HCT116 (cell line): ENCODE measurements at regions of chr16 and their contacts with region 1.

Region 1: DNA sequence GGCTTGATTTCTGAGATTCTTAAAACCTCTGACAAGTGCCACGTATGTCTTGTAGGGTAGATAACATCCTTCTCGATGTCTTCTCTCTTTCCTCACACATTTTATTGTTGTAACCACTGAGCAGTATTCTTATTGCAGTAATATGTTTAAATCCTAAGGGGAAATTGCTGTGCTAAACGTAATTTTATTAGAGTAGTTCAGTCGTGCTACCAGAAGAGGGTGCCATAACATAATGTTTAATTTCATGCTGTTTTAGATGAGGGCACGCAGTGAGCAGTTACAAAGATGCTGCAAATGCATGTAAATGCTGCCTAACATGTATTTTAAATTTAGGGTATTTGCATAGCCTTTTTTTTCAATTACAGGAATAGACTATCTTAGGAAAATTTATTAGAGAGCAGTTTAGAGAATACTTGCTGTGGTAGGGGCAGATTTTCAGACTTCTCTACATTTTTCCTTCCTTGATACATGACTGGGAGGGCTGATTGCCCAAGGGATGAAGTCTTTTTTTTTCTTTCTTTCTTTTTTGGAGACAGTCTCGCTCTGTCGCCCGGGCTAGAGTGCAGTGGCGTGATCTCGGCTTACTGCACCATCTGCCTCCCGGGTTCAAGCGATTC is 51.7 kb downstream of the GAN start:
- DNase-seq: peak; percentile 46
- ATAC-seq: peak; percentile 89
- H3K4me3 ChIP-seq: no peak overlapping the region
- H3K27ac ChIP-seq: no peak overlapping the region
- H3K4me1 ChIP-seq: no peaks in the 10 kb centered on the region
- H3K27me3 ChIP-seq: no peaks in the 10 kb centered on the region
- CTCF ChIP-seq: peak; percentile 57 to 96 (median 89); a peak in 5 of 6 replicates
- POLR2A ChIP-seq: no peak
- RAD21 ChIP-seq: peak; percentile 95

Region 2: GRCh38 chr16:81174654-81175571 is 191.5 kb before region 1 on chr16:
- CTCF ChIA-PET with region 1: no interaction called
- POLR2A ChIA-PET with region 1: no interaction called
- RAD21 ChIA-PET with region 1: no interaction called
- intact Hi-C with region 1: no loop called
- DNase-seq: no peak
- ATAC-seq: peak; percentile 31; the same call in 1 of the 2 replicates
- H3K4me3 ChIP-seq: no peak overlapping the region
- H3K27ac ChIP-seq: no peak overlapping the region
- H3K4me1 ChIP-seq: peaks cover 3 to 30% of the 10 kb centered on the region in 2 experiments; a peak in 2 of 4 replicates
- H3K27me3 ChIP-seq: no peaks in the 10 kb centered on the region
- CTCF ChIP-seq: no peak
- POLR2A ChIP-seq: no peak
- RAD21 ChIP-seq: no peak

Region 3: GRCh38 chr16:81668243-81669097 is 302.0 kb after region 1 on chr16:
- CTCF ChIA-PET with region 1: no interaction called
- POLR2A ChIA-PET with region 1: no interaction called
- RAD21 ChIA-PET with region 1: no interaction called
- intact Hi-C with region 1: no loop called
- DNase-seq: no peak
- ATAC-seq: peak; percentile 5; the same call in 1 of the 2 replicates
- H3K4me3 ChIP-seq: no peak overlapping the region
- H3K27ac ChIP-seq: no peak overlapping the region
- H3K4me1 ChIP-seq: no peaks in the 10 kb centered on the region
- H3K27me3 ChIP-seq: no peaks in the 10 kb centered on the region
- CTCF ChIP-seq: no peak
- POLR2A ChIP-seq: no peak
- RAD21 ChIP-seq: no peak

Region 4: DNA sequence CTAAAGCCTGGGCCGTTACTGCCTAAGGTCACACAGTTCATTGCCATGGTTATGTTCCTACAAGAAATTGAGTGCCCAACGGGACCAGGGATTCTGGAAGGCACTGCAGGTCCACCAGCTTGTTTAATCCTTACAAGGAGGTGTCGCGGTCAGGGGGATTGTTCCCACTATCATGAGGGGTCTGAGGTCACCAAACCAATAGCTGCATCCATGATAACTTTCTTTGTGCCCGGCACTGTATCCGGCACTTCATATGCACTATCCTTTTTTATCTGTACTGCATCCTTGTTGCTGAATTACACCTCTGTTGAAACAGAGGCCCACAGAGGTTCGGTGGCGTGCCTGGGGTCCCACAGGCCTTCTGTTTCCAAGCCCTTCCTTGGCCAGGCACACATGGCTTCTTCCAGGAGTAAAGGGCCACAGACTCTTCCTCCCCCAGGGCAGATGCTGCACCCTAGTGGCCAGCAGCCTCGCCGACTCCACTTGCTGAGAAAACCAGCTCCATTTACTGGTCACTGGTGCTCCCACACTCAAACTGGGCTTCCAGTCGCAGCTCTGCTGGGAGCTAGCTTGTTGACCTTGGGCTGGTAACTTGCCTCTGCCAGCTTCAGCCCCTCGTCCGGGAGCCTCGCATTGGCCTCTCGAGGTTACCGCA is 330.7 kb after region 1 on chr16:
- CTCF ChIA-PET with region 1: interaction called, 12 read pairs
- POLR2A ChIA-PET with region 1: no interaction called
- RAD21 ChIA-PET with region 1: no interaction called
- intact Hi-C with region 1: loop called (anchors 1 kb)
- DNase-seq: peak; percentile 51
- ATAC-seq: peak; percentile 84
- H3K4me3 ChIP-seq: no peak overlapping the region
- H3K27ac ChIP-seq: no peak overlapping the region
- H3K4me1 ChIP-seq: peaks cover 0 to 20% of the 10 kb centered on the region in 2 experiments; a peak in 2 of 4 replicates
- H3K27me3 ChIP-seq: no peaks in the 10 kb centered on the region
- CTCF ChIP-seq: peak; percentile 89 to 96 (median 96)
- POLR2A ChIP-seq: no peak
- RAD21 ChIP-seq: peak; percentile 98

Region 5: DNA sequence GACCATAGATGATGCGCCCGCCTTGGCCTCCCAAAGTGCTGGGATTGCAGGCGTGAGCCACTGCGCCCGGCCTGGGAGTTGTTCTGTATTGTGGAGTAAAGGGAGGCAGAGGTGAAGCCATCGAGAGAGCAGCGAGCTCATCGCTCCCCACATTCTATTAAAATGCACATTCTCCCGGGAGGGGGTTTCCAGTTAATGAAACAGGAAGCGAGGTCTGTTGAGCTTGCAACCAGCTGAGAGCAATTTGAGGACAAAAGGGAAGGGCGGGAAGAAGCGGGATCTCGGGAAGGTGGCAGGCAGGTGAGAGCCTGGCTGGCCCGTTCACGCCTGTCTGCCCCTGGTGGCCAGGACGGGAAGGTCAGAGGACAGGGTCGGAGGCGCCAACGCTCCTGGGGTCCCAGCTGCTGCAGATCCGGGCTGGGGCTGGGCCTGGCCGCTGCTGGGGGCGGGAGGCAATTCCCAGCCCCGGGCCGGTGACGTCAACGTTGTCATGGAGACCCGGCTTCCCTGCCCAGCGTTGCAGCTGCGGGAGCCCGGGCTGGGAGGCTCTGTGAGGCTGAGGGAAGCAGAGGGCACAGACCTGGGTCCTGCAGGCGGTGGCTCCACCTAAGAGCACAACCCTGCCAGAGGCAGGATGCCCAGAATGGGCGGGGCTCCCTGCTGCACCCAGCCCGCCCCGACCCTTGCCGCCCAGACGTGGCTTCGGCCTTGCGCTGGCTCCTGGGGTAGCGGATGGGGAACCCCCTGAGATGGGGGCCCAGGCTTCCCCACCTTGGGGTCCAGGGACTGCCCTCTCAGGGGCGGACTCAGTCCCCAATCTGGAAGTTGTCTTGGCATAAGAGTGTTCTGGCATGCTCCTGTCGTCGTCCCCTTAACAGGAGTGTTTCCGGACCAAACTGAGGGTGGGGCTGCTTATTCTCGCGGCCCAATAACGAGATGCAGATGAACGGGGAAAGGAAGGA is 363.9 kb after region 1 on chr16:
- CTCF ChIA-PET with region 1: interaction called, 15 read pairs
- POLR2A ChIA-PET with region 1: interaction called, 3 read pairs
- RAD21 ChIA-PET with region 1: no interaction called
- intact Hi-C with region 1: no loop called
- DNase-seq: peak; percentile 75
- ATAC-seq: peak; percentile 84
- H3K4me3 ChIP-seq: peak overlapping the region; percentile 19 to 38
- H3K27ac ChIP-seq: peak overlapping the region; percentile 38
- H3K4me1 ChIP-seq: peaks cover 18 to 34% of the 10 kb centered on the region in 2 experiments
- H3K27me3 ChIP-seq: no peaks in the 10 kb centered on the region
- CTCF ChIP-seq: peak; percentile 54 to 88 (median 88); a peak in 5 of 6 replicates
- POLR2A ChIP-seq: peak; percentile 36
- RAD21 ChIP-seq: peak; percentile 46

Region 6: DNA sequence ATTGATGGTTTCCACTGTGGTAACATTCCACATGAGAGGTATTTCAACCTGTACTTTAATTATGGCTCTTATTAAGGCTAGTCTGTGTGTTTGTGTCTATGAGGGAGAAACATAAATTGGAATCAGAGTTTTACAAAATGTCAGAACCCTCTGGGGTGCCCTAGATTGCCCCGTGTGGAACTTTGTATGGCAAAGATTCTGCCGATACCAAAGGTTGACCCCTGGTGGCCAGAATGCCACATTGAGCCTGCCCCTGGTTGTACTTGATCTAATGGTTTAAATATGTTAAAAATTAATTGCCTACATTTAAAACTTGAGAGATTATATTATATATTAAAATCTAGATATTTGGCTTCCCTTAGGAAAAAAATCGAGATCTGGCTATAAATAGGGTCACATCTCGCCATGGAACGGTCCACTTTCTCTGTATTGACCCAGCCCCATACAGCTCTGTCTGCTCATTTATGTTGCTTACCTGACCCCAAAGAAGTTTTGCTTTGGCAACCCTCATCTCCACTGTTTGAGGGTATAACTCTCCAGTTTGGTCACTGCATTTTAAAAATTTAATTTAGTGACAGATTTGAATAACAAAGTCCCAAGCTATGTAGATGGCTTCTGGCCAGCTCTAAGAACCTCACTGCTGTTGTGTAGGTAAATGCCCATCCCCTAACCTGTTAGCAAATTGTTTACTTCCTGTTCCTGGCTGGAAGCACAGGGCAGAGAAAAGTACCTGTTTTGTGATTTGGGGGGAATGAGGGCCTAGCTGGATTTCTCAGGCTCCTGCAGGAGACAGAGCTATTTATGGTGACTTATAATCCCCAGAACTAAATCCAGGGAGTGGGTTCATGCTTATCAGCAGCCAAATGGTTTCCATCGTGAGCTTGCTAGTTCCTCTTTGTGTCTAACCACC is 507.7 kb after region 1 on chr16:
- CTCF ChIA-PET with region 1: no interaction called
- POLR2A ChIA-PET with region 1: no interaction called
- RAD21 ChIA-PET with region 1: no interaction called
- intact Hi-C with region 1: loop called (anchors 5 kb)
- DNase-seq: peak; percentile 57
- ATAC-seq: peak; percentile 98
- H3K4me3 ChIP-seq: no peak overlapping the region
- H3K27ac ChIP-seq: no peak overlapping the region
- H3K4me1 ChIP-seq: no peaks in the 10 kb centered on the region
- H3K27me3 ChIP-seq: no peaks in the 10 kb centered on the region
- CTCF ChIP-seq: peak; percentile 91 to 99 (median 97)
- POLR2A ChIP-seq: no peak
- RAD21 ChIP-seq: peak; percentile 81